Gastrocnemius medialis (tissue), 4 donors: ENCODE measurements at regions of chr17 and their contacts with region 1.

Region 1: GRCh38 chr17:82751571-82752370 is at the start of gene TBCD:
- DNase-seq: peak; percentile 78 to 83
- ATAC-seq: peak; percentile 91
- H3K4me3 ChIP-seq: peak within 1 kb of the TSS; percentile 67 to 91 (median 80)
- H3K27ac ChIP-seq: peak within 1 kb of the TSS; percentile 82 to 95 (median 86)
- H3K4me1 ChIP-seq: peaks cover 12 to 17% of the 10 kb centered on the region in 2 donors
- H3K27me3 ChIP-seq: no peaks in the 10 kb centered on the region
- CTCF ChIP-seq: peak in 1 of 5 experiments; percentile 29
- POLR2A ChIP-seq: peak; percentile 37 to 60
- total RNA-seq, gene TBCD: 18.0 to 50.4 (median 33.3) TPM

Region 2: GRCh38 chr17:82351716-82352488 is 399.9 kb before region 1 on chr17:
- in situ Hi-C with region 1: loop called in 1 of 4 experiments (anchors 25 kb)
- intact Hi-C with region 1: no loop called
- DNase-seq: peak; percentile 62 to 72
- ATAC-seq: peak; percentile 74 to 88
- H3K4me3 ChIP-seq: no peak overlapping the region
- H3K27ac ChIP-seq: no peak overlapping the region
- H3K4me1 ChIP-seq: no peaks in the 10 kb centered on the region
- H3K27me3 ChIP-seq: peaks cover 8 to 21% (median 13%) of the 10 kb centered on the region in 3 donors
- CTCF ChIP-seq: peak; percentile 89 to 98 (median 97)
- POLR2A ChIP-seq: no peak

Region 3: GRCh38 chr17:82648166-82648668 is 103.6 kb before region 1 on chr17 and contains the start of gene WDR45B:
- in situ Hi-C with region 1: loop called in 3 of 4 experiments (anchors 10 to 25 kb)
- intact Hi-C with region 1: loop called (anchors 1 kb)
- DNase-seq: peak; percentile 91 to 96
- ATAC-seq: peak; percentile 93 to 95
- H3K4me3 ChIP-seq: peak within 1 kb of the TSS; percentile 76 to 98 (median 92)
- H3K27ac ChIP-seq: peak within 1 kb of the TSS; percentile 92 to 100 (median 96)
- H3K4me1 ChIP-seq: peaks cover 31 to 37% of the 10 kb centered on the region in 2 donors
- H3K27me3 ChIP-seq: no peaks in the 10 kb centered on the region
- CTCF ChIP-seq: no peak
- POLR2A ChIP-seq: peak; percentile 98
- total RNA-seq, gene WDR45B: 28.0 to 39.2 (median 34.8) TPM

Region 4: DNA sequence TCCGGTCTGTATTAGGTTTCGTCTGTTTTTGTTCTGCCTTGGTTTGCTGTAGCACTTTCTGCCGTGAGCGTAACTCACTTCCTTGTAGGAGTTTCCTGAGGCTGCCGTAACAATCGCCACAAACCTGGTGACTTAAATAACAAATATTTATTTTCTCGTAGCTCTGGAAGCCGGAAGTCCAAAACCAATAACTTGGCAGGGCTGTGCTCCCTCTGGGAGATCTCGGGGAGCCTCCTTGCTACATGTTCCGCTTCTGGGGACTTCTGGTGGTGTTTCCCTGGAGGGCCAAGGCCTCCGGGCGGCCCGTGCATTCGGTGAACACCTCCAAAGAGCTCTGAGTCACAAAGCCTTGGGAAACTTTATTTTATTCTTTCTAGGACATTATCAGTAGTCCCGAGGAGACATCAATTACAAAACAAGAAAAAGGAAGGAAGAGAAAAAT is 96.7 kb before region 1 on chr17:
- in situ Hi-C with region 1: loop called in 3 of 4 experiments (anchors 10 to 25 kb)
- intact Hi-C with region 1: no loop called
- DNase-seq: no peak
- ATAC-seq: no peak
- H3K4me3 ChIP-seq: no peak overlapping the region
- H3K27ac ChIP-seq: peak overlapping the region; percentile 34 to 54 (median 44)
- H3K4me1 ChIP-seq: peaks cover 0 to 6% of the 10 kb centered on the region in 2 donors
- H3K27me3 ChIP-seq: no peaks in the 10 kb centered on the region
- CTCF ChIP-seq: no peak
- POLR2A ChIP-seq: no peak

Region 5: DNA sequence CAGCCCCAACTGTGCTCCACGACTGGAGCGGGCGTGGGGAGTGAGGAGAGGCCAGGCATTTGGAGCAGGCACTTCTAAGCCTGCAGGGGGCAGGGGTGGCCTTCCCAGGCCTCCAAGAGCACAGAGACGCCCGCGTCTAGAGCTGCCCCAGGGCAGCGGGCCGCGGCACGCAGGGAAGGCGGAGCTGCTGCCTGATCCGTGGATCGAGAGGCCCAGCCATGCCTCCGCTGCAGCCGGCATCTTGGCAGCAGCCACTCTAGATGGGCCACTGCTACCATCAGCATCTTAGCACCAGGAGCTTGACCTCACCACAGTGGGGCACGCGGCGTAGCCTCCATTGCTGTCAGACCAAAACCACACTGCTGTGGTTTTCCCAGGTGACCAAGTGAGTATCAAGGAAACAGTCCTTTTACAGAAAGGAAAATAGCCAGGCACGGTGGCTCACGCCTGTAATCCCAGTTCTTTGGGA is 83.1 kb before region 1 on chr17:
- in situ Hi-C with region 1: loop called in 2 of 4 experiments (anchors 25 kb)
- intact Hi-C with region 1: no loop called
- DNase-seq: peak in 1 of 2 donors; percentile 45
- ATAC-seq: peak; percentile 65 to 71
- H3K4me3 ChIP-seq: no peak overlapping the region
- H3K27ac ChIP-seq: peak overlapping the region in 2 of 4 donors; percentile 45 to 55
- H3K4me1 ChIP-seq: peaks cover 5 to 8% of the 10 kb centered on the region in 2 donors
- H3K27me3 ChIP-seq: no peaks in the 10 kb centered on the region
- CTCF ChIP-seq: peak; percentile 34 to 69 (median 52)
- POLR2A ChIP-seq: no peak

Region 6: DNA sequence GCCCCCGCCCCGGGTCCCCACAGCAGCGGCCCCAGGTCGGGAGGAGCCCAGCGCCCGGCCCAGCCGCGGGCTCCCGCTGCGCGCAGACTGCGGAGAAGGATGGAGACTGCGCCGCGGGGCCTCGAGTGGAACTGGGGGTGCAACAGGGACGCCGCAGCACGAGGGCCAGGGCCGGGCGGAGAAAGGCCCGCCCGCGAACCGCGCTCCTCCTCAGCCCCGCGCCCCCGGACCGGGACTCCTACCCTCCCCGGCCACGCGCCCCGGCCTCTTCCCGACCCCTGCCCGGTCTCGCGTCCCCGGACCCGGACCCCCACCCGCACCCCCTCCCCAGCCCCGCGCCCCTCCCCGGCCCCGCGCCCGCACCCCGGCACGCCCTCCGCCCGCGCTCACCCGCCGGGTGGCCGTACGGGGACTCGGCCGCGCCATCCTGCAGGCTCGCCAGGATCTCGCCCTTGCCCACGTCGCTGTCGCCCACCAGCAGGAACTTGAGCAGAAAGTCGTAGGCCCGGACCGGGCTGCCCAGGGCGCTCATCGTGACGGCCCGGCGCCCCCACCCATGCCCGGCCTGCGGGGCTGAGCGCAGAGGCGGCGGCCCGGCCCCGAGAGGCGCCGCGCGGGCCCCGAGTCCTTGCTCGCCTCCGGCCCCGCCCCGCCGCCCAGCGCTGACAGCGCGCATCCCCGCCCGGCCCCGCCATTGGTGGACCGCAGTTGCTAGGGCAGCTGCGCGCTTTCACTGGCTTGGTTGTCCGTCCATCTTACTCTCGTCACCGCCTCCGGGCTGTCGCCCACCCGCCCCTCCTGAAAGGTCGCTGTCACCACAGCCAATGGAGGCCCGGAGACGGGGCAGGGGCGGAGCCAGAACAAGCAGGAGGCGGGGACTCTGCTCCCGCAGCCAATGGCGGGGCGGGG is 53.5 kb before region 1 on chr17 and contains the start of gene RAB40B:
- in situ Hi-C with region 1: no loop called
- intact Hi-C with region 1: loop called (anchors 1 kb)
- DNase-seq: peak; percentile 99 to 100
- ATAC-seq: peak; percentile 96 to 99
- H3K4me3 ChIP-seq: peak within 1 kb of the TSS; percentile 67 to 96 (median 78)
- H3K27ac ChIP-seq: peak within 1 kb of the TSS; percentile 70 to 87 (median 77)
- H3K4me1 ChIP-seq: peaks cover 6 to 19% of the 10 kb centered on the region in 2 donors
- H3K27me3 ChIP-seq: no peaks in the 10 kb centered on the region
- CTCF ChIP-seq: no peak
- POLR2A ChIP-seq: peak; percentile 60 to 62
- total RNA-seq, gene RAB40B: 19.0 to 52.7 (median 24.4) TPM

Region 7: GRCh38 chr17:82716203-82717010 is 35.4 kb before region 1 on chr17 and contains the start of gene FN3KRP:
- in situ Hi-C with region 1: no loop called
- intact Hi-C with region 1: loop called (anchors 1 kb)
- DNase-seq: peak; percentile 94 to 95
- ATAC-seq: peak; percentile 86 to 93
- H3K4me3 ChIP-seq: peak within 1 kb of the TSS; percentile 56 to 76 (median 70)
- H3K27ac ChIP-seq: peak within 1 kb of the TSS; percentile 67 to 85 (median 78)
- H3K4me1 ChIP-seq: peaks cover 26 to 27% of the 10 kb centered on the region in 2 donors
- H3K27me3 ChIP-seq: no peaks in the 10 kb centered on the region
- CTCF ChIP-seq: no peak
- POLR2A ChIP-seq: peak; percentile 46 to 60
- total RNA-seq, gene FN3KRP: 2.3 to 7.9 (median 3.9) TPM

Region 8: DNA sequence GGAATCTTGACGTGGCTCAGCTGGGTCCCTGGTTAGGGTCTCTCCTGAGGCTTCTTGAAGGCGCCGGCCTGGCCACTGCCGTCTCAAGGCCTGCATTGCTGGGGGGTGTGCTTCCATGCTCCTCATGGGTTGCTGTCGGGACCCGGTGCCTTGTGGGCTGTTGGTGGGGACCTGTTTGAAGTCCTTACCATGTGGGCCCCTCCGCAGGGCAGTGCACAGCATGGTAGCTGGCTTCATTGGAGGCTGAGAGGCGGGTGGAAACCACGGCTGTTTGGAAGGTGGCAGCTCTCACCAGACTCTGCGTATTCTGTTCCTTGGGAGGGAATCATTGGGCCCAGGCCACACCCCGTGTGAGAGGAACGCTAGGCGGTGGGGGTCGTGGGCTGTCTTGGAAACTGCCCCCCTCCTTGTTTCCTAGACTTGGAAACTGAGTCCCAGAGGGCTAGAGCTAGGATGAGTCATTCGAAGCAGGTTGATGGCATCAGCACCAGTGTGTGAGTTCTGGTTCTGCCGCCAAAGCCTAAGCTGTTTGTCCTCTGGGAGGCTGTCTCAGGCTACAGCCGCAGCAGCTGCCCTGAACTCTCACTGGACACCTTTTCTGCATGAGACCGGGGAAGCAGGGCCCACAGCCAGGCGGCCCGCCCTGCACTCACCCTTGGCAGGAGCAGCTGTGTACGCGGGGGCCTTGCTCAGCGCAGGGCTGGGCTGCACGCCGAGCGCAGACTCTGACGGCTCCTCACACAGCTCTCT is 52.8 kb after region 1 on chr17:
- in situ Hi-C with region 1: no loop called
- intact Hi-C with region 1: no loop called
- DNase-seq: peak; percentile 92 to 98
- ATAC-seq: peak; percentile 97 to 98
- H3K4me3 ChIP-seq: peak overlapping the region in 2 of 4 donors; percentile 3 to 14
- H3K27ac ChIP-seq: peak overlapping the region; percentile 83 to 92 (median 88)
- H3K4me1 ChIP-seq: peaks cover 16 to 22% of the 10 kb centered on the region in 2 donors
- H3K27me3 ChIP-seq: no peaks in the 10 kb centered on the region
- CTCF ChIP-seq: peak in 1 of 5 experiments; percentile 13
- POLR2A ChIP-seq: peak in 1 of 2 donors; percentile 24